ENCODE measurements at regions of chr5 and their contacts with region 1.

Region 1: GRCh38 chr5:151051066-151051930 is 29.5 kb downstream of the TNIP1 start:
- DNase-seq: peak; percentile 53 to 70 (median 59)
- H3K4me3 ChIP-seq: no peak overlapping the region
- H3K4me3 Mint-ChIP-seq: no peak overlapping the region
- H3K27ac ChIP-seq: no peak overlapping the region
- H3K27ac Mint-ChIP-seq: peak overlapping the region; percentile 24 to 85 (median 62)
- H3K4me1 ChIP-seq: no peaks in the 10 kb centered on the region
- H3K4me1 Mint-ChIP-seq: peaks cover 5 to 17% (median 6%) of the 10 kb centered on the region in 4 donors
- H3K27me3 ChIP-seq: no peaks in the 10 kb centered on the region
- H3K27me3 Mint-ChIP-seq: no peaks in the 10 kb centered on the region

Region 2: DNA sequence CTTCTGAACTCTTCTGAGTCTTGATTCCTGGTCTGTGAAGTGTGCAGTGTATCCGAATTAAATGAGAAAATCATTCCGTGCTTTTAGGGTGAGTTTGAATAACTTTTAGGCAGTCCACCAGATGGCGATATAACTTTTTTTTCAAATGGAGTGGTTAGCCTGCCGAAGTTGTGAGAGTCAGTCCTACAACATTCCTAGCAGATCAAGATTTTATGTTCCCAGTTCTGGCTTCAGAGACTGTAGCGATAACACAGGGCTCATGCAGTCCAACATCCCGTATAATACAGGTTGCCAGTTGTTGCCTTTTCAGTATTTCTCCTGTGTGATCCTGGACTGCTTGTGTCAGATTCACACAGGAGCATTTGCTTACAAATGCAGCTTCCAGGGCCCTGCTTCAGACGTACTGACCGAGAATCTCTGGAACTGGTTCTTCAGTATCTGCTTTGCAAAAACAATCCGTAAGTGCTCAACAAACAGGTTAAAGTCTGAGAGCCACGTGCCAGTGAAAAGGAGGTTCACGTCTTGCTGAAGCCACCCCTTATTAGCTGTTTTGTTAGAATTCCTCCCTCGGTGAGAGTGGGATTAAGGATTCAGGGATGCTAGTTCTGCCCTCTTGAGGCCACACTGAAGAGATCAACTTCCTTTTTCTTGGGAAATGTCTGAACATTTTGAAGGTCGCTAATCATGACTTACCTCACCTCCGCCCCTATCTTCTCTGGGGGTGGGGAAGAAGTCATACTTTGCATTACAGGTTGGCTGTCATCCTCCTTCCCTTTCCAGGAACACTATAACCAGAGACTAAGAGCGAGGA is 250.0 kb before region 1 on chr5:
- CTCF ChIA-PET with region 1: no interaction called
- POLR2A ChIA-PET with region 1: no interaction called
- intact Hi-C with region 1: loop called (anchors 5 kb)
- DNase-seq: peak in 4 of 5 donors; percentile 42 to 50 (median 44)
- H3K4me3 ChIP-seq: no peak overlapping the region
- H3K4me3 Mint-ChIP-seq: no peak overlapping the region
- H3K27ac ChIP-seq: no peak overlapping the region
- H3K27ac Mint-ChIP-seq: peak overlapping the region in 2 of 7 donors; percentile 37 to 55
- H3K4me1 ChIP-seq: peaks cover 8% of the 10 kb centered on the region
- H3K4me1 Mint-ChIP-seq: peaks cover 3 to 5% (median 5%) of the 10 kb centered on the region in 4 donors
- H3K27me3 ChIP-seq: no peaks in the 10 kb centered on the region
- H3K27me3 Mint-ChIP-seq: peaks cover 3 to 6% of the 10 kb centered on the region in 2 donors

Region 3: DNA sequence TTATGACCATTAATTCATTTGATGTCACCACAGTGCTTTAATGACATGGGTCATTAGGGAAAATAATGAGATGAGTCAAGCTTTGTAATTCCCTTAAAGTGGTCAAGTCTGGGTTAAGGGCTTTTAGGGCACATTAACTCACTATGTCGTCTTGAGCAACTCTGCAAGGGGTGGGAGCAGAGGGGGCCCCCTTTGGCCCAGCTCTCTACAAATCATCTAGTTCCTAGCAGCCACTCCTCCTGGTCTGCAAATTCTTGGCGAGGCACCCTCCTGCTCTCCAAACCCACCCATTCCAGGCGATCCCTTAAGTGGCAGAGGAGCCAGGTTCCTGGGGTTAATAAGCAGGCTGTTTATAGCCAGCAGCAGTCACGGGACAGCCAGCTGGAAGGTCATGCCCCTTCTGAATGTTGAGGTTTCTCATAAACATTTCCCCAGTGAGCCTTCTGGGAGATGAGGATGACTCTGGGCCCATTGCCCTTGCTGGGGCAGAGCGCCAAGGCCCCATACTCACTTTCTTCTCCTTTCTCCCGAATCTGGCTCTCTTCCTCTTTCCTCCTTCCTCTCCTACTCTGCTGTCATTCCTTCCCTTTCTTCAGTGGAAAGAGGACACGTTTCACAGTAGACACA is 45.2 kb before region 1 on chr5:
- CTCF ChIA-PET with region 1: no interaction called
- POLR2A ChIA-PET with region 1: no interaction called
- intact Hi-C with region 1: no loop called
- DNase-seq: no peak
- H3K4me3 ChIP-seq: no peak overlapping the region
- H3K4me3 Mint-ChIP-seq: no peak overlapping the region
- H3K27ac ChIP-seq: no peak overlapping the region
- H3K27ac Mint-ChIP-seq: no peak overlapping the region
- H3K4me1 ChIP-seq: no peaks in the 10 kb centered on the region
- H3K4me1 Mint-ChIP-seq: no peaks in the 10 kb centered on the region
- H3K27me3 ChIP-seq: no peaks in the 10 kb centered on the region
- H3K27me3 Mint-ChIP-seq: peaks cover 0 to 3% of the 10 kb centered on the region in 2 donors

Region 4: DNA sequence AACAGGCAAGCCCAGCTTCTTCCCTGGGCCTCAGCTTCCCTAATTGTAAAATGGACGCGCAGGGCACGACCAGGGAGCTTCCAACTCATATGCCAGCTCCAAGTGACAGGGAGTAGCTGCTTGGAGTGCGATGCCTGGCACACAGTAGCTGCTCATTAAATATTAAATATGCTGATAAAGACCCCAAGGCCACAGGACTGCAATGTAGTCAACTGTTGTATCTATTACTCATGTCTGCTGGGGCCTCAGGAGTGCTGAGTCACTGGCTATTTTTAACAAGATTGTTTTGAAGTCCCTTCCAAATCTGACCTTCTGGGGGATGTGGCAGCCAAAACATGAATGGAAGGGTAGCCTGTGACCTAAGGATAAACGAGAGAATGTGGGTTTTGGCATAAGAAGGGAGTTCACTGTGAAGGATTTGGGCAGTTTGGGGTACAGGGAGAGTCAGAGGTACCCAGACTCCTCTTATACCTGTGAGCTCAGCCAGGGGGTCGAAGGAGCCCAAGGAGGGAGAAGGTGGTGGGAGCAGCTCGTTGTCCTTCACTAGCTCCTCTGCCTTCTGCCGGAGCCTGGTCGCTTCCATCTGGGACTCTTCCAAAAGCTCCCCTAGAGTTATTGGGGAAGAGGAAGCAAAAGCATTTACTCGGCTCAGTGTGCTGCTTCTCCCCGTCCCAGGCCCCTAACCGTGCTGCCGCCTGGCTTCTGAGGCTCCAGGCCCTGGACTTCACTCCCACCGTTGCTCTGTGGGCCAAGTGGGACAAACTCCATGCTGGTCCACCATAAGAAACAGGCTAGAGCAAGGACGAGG is 12.0 kb after region 1 on chr5:
- CTCF ChIA-PET with region 1: interaction called, 14 read pairs
- POLR2A ChIA-PET with region 1: interaction called, 4 read pairs
- intact Hi-C with region 1: no loop called
- DNase-seq: no peak
- H3K4me3 ChIP-seq: no peak overlapping the region
- H3K4me3 Mint-ChIP-seq: no peak overlapping the region
- H3K27ac ChIP-seq: no peak overlapping the region
- H3K27ac Mint-ChIP-seq: peak overlapping the region in 4 of 7 donors; percentile 29 to 65 (median 48)
- H3K4me1 ChIP-seq: peaks cover 60% of the 10 kb centered on the region
- H3K4me1 Mint-ChIP-seq: peaks cover 42 to 71% (median 63%) of the 10 kb centered on the region in 4 donors
- H3K27me3 ChIP-seq: no peaks in the 10 kb centered on the region
- H3K27me3 Mint-ChIP-seq: peaks cover 2 to 3% of the 10 kb centered on the region in 2 donors

Region 5: GRCh38 chr5:151068433-151069197 is 17.3 kb after region 1 on chr5:
- CTCF ChIA-PET with region 1: interaction called, 21 read pairs
- POLR2A ChIA-PET with region 1: interaction called, 4 read pairs
- intact Hi-C with region 1: no loop called
- DNase-seq: peak in 1 of 5 donors; percentile 10
- H3K4me3 ChIP-seq: no peak overlapping the region
- H3K4me3 Mint-ChIP-seq: peak overlapping the region in 7 of 8 donors; percentile 12 to 61 (median 52)
- H3K27ac ChIP-seq: peak overlapping the region; percentile 29
- H3K27ac Mint-ChIP-seq: peak overlapping the region; percentile 25 to 87 (median 81)
- H3K4me1 ChIP-seq: peaks cover 85% of the 10 kb centered on the region
- H3K4me1 Mint-ChIP-seq: peaks cover 60 to 86% (median 74%) of the 10 kb centered on the region in 4 donors
- H3K27me3 ChIP-seq: no peaks in the 10 kb centered on the region
- H3K27me3 Mint-ChIP-seq: no peaks in the 10 kb centered on the region

Region 6: GRCh38 chr5:151080623-151081430 is 29.5 kb after region 1 on chr5 and contains the start of gene TNIP1:
- CTCF ChIA-PET with region 1: interaction called, 42 read pairs
- POLR2A ChIA-PET with region 1: interaction called, 7 read pairs
- intact Hi-C with region 1: no loop called
- DNase-seq: peak; percentile 91 to 97 (median 93)
- H3K4me3 ChIP-seq: peak within 1 kb of the TSS; percentile 61 to 87
- H3K4me3 Mint-ChIP-seq: peak within 1 kb of the TSS; percentile 88 to 98 (median 94)
- H3K27ac ChIP-seq: peak within 1 kb of the TSS; percentile 99
- H3K27ac Mint-ChIP-seq: peak within 1 kb of the TSS; percentile 76 to 98 (median 96)
- H3K4me1 ChIP-seq: peaks cover 89% of the 10 kb centered on the region
- H3K4me1 Mint-ChIP-seq: peaks cover 69 to 94% (median 76%) of the 10 kb centered on the region in 4 donors
- H3K27me3 ChIP-seq: no peaks in the 10 kb centered on the region
- H3K27me3 Mint-ChIP-seq: no peaks in the 10 kb centered on the region
- total RNA-seq, gene TNIP1: 227 to 233 TPM

Region 7: DNA sequence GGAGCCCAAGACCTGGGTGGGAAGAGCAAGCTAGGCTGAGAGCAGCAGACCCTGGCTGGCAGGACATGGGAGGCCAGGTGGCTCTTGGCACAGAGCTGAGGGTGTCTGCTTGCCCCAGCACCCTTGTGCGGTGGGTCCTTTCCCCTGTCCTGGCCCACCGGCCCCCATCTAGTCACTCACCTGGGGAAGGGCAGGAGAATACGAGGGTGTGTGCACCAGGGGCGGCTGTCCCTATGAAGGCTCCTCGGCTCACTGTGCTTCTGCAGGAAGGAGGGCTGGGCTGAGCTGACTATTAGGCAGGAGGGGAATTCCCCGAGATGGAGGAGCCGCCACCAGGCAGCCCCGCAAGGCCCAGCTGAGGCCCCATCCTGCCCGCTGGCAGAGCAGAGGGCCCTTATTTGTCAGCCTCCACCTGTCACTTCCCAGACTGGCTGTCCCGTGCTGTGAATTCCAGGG is 35.6 kb after region 1 on chr5:
- CTCF ChIA-PET with region 1: interaction called, 42 read pairs
- POLR2A ChIA-PET with region 1: interaction called, 3 read pairs
- intact Hi-C with region 1: no loop called
- DNase-seq: peak; percentile 65 to 84 (median 69)
- H3K4me3 ChIP-seq: peak overlapping the region; percentile 20 to 48
- H3K4me3 Mint-ChIP-seq: peak overlapping the region; percentile 65 to 83 (median 76)
- H3K27ac ChIP-seq: peak overlapping the region; percentile 99
- H3K27ac Mint-ChIP-seq: peak overlapping the region; percentile 76 to 94 (median 90)
- H3K4me1 ChIP-seq: peaks cover 59% of the 10 kb centered on the region
- H3K4me1 Mint-ChIP-seq: peaks cover 41 to 68% (median 57%) of the 10 kb centered on the region in 4 donors
- H3K27me3 ChIP-seq: no peaks in the 10 kb centered on the region
- H3K27me3 Mint-ChIP-seq: no peaks in the 10 kb centered on the region

Region 8: DNA sequence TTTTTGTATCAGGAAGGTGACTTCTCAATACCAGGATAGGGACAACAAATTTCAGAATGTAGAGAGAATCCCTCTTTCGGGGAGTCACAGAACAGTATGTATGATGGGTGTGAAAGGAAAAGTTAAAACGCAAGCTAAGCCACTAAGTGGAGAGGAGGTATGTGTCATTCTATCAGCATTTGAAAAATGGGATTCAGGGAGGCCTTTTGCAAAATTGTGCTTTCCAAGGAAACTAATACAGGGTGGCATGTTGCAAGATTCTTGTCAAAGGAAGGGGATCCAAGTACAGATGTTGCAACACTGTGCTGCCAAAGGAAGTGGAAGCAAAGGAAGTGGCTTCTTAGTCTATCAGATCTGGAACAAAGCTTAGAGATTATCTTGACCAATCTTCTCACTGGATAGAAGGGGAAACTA is 42.2 kb after region 1 on chr5:
- CTCF ChIA-PET with region 1: interaction called, 17 read pairs
- POLR2A ChIA-PET with region 1: interaction called, 6 read pairs
- intact Hi-C with region 1: no loop called
- DNase-seq: no peak
- H3K4me3 ChIP-seq: no peak overlapping the region
- H3K4me3 Mint-ChIP-seq: peak overlapping the region in 7 of 8 donors; percentile 48 to 84 (median 81)
- H3K27ac ChIP-seq: peak overlapping the region; percentile 58
- H3K27ac Mint-ChIP-seq: peak overlapping the region; percentile 87 to 96 (median 93)
- H3K4me1 ChIP-seq: peaks cover 47% of the 10 kb centered on the region
- H3K4me1 Mint-ChIP-seq: peaks cover 42 to 72% (median 54%) of the 10 kb centered on the region in 4 donors
- H3K27me3 ChIP-seq: no peaks in the 10 kb centered on the region
- H3K27me3 Mint-ChIP-seq: no peaks in the 10 kb centered on the region